A673 (cell line): ENCODE measurements at regions of chr14 and their contacts with region 1.

Region 1: GRCh38 chr14:60839657-60840056 is 105.1 kb downstream of the MNAT1 start:
- DNase-seq: no peak
- H3K4me3 ChIP-seq: no peak overlapping the region
- H3K27ac ChIP-seq: no peak overlapping the region
- H3K4me1 ChIP-seq: peaks cover 9% of the 10 kb centered on the region
- H3K27me3 ChIP-seq: no peaks in the 10 kb centered on the region
- CTCF ChIP-seq: no peak

Region 2: DNA sequence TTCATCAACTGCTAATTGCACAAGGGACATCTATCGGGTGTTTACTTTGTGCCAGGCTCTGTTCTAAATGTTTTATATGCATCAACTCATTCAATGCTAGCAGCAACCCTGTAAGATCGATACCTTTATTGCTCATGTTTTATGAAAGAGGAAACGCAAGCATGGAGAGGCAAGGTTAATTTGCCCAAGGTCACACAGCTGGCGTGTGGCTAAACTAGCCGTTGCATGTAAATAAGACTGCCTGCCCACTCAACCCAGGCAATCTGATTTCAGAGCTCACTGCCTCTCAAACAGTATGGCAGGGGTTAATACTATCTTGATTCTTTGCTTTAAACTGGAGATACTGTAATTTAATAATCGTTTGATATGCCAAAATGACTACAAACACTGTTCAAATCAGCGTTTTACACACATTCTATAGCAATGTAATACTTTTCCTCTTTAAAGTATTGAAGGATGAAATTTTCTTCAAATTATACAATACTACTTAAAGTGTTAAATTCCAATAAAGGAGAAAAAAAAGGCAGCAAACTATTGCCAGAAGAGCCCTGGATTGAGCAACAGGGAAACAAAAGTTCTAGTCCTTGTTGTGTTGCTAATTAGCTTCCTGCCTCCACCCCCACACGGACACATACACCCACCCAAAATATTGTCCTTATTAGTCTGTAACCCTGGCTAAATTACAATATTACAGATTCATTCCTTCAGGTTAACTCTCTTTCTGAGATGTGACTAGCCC is 635.4 kb before region 1 on chr14:
- CTCF ChIA-PET with region 1: no interaction called
- POLR2A ChIA-PET with region 1: no interaction called
- intact Hi-C with region 1: no loop called
- DNase-seq: no peak
- H3K4me3 ChIP-seq: no peak overlapping the region
- H3K27ac ChIP-seq: no peak overlapping the region
- H3K4me1 ChIP-seq: no peaks in the 10 kb centered on the region
- H3K27me3 ChIP-seq: no peaks in the 10 kb centered on the region
- CTCF ChIP-seq: no peak

Region 3: DNA sequence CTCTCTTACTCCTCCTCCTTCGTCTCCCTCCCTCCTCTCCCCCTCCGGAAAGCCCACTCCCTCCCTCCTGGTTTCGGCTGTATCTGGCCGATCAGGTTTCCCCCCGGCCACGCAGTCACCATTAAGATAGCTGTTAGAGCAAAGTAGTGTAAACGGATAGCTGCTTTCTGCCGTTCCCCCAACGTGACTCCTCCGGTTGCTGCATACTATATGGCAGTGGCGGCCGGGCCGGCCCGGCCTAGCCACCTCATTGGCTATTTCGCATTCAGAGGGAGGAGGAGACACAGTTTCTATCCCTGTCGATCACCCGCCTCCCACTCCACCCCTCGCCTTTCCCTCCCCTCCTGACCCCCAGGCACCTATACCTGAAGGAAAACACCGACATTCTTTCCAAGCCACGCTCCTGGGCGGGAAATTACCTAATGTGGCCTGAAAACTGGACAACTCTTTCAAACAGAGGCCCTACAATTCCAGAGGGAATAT is 115.5 kb before region 1 on chr14 and contains the start of gene SIX4:
- CTCF ChIA-PET with region 1: interaction called, 10 read pairs
- POLR2A ChIA-PET with region 1: no interaction called
- intact Hi-C with region 1: no loop called
- DNase-seq: peak; percentile 84
- H3K4me3 ChIP-seq: peak within 1 kb of the TSS; percentile 84
- H3K27ac ChIP-seq: peak within 1 kb of the TSS; percentile 79
- H3K4me1 ChIP-seq: peaks cover 9% of the 10 kb centered on the region
- H3K27me3 ChIP-seq: no peaks in the 10 kb centered on the region
- CTCF ChIP-seq: no peak
- total RNA-seq, gene SIX4: 13.6 and 16.0 TPM in 2 replicates

Region 4: DNA sequence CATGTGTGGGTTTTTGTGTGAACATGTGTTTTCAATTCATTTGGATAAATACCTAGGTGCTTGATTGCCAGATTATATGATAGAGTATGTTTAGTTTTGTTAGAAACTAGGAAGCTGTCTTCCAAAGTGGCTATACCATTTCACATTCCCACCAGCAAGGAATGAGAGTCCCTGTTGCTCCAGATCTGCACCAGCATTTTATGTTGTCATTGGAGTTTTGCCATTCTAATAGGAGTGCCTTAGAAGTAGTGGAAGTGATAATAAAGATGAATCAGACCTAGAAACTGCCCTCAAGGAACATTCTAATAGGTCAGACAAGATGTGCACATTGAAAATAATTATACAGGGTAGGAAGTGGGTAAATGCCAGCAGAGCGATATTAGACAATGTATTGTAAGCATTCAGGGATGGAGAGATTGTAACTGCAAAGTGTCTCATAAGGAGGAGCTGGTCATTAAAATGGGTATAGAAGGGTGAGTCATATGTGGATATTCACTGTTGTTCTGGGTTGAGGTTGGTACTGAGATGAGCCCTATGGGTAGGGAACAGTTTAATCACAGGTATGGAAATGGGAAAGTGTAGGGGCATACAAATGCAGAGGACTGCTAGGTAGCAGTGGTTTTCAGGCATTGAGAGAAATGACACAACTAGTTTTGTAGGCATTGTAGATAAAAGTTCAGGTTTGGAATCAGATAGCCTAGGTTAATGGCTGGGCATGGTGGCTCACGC is 33.7 kb before region 1 on chr14:
- CTCF ChIA-PET with region 1: no interaction called
- POLR2A ChIA-PET with region 1: no interaction called
- intact Hi-C with region 1: no loop called
- DNase-seq: no peak
- H3K4me3 ChIP-seq: no peak overlapping the region
- H3K27ac ChIP-seq: no peak overlapping the region
- H3K4me1 ChIP-seq: no peaks in the 10 kb centered on the region
- H3K27me3 ChIP-seq: no peaks in the 10 kb centered on the region
- CTCF ChIP-seq: no peak